ENCODE measurements at regions of chr10 and their contacts with region 1.

Region 1: DNA sequence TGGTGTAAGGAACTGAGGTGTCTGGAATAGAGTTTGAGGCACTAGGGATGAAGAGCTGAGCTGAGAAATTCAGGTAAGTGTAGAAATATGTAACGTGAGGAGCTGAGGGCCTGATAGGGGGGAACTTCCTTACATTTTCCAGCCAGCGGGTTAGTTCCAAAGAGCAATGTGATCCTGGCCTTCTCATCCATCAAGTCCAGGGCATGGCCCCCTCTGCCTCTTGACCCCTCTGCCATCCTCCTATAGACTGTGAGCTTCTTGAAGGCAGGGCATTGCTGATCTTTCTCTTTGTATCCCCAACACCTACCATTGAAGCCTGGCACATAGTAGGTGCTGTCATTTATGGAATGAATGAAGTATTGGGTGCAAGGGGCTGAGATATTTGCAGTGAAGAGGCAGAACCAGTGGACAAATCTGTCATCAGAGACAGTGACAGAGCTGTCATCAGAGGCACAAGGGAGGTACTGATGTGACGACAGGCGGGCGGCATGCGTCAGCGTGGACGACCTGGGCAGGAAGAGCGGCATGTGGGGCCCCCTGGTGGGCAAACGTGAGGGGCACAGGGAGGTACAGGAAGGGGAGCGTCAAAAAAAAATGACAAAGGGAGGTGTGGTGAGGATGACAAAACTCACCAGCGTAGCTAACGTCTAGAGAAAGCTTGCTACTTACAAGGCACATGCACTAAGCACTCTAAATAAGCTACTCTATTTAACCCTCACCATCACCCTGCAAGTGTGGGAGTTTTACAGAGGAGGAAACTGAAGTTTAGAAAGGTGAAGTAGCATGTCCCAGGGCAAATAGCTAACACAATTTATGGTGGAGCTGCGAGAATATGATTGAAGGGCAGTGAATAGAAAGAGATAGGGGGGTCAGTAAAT is 5.2 kb upstream of the CAMK2G start:
- DNase-seq: peak; percentile 98
- ATAC-seq: peak; percentile 86
- H3K4me3 Mint-ChIP-seq: no peak overlapping the region
- H3K27ac Mint-ChIP-seq: peak overlapping the region; percentile 71
- H3K4me1 Mint-ChIP-seq: peaks cover 45% of the 10 kb centered on the region
- H3K27me3 Mint-ChIP-seq: no peaks in the 10 kb centered on the region

Region 2: GRCh38 chr10:73252445-73253224 is 626.9 kb before region 1 on chr10 and contains the start of gene MRPS16:
- CTCF ChIA-PET with region 1: no interaction called
- POLR2A ChIA-PET with region 1: no interaction called
- intact Hi-C with region 1: loop called in 1 of 2 experiments (anchors 10 kb)
- DNase-seq: peak; percentile 95
- ATAC-seq: peak; percentile 84
- H3K4me3 Mint-ChIP-seq: peak within 1 kb of the TSS; percentile 94
- H3K27ac Mint-ChIP-seq: peak within 1 kb of the TSS; percentile 98
- H3K4me1 Mint-ChIP-seq: peaks cover 32% of the 10 kb centered on the region
- H3K27me3 Mint-ChIP-seq: no peaks in the 10 kb centered on the region
- total RNA-seq, gene MRPS16: 123 to 138 TPM

Region 3: DNA sequence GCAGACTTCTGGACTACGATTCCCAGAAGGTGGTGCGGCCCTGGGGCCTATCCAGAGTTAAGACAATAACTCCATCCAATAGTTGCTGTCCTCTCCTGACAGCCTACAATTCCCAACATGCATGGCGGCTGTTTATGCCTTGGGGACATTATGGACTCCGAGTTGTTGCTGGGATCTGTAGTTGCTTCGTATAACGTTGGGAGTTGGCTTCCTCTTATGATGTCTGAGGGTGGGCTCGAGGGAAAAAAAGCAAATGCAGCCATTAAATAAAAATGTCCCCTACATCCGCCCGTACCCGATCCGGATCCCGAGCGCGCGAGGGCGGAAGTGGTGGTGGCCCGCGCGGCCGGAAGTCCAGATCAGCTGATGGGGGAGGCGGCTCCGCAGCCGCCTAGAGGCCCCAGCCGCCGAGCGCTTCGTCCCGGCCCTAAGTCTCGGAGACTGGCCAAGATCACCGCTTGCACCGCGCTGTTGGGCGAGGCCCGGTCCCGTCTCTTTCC is 94.3 kb before region 1 on chr10 and contains the start of gene ZSWIM8:
- CTCF ChIA-PET with region 1: interaction called, 5 read pairs
- POLR2A ChIA-PET with region 1: no interaction called
- intact Hi-C with region 1: loop called in 1 of 2 experiments (anchors 1 kb)
- DNase-seq: peak; percentile 90
- ATAC-seq: peak; percentile 85
- H3K4me3 Mint-ChIP-seq: peak within 1 kb of the TSS; percentile 83
- H3K27ac Mint-ChIP-seq: peak within 1 kb of the TSS; percentile 98
- H3K4me1 Mint-ChIP-seq: peaks cover 46% of the 10 kb centered on the region
- H3K27me3 Mint-ChIP-seq: no peaks in the 10 kb centered on the region
- total RNA-seq, gene ZSWIM8: 40.1 to 67.3 TPM

Region 4: DNA sequence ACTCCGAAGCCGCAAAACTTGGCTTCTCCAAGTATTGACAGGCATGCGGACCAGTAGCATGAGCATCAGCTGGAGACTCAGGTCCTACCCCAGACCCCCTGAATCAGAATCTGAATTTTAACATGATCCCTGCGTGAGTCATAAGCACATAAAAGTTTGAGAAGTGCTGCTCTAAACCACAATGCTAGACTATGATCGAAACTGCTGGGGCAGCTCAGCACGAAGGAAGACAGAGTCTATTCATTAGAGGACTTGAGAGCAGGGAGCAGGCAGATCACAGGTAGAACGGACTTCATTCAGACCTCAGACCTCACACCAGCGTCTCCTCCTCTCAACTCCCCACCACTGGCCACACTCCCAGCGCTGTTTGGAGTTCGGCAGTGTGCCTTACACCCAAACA is 22.1 kb before region 1 on chr10:
- CTCF ChIA-PET with region 1: interaction called, 456 read pairs
- POLR2A ChIA-PET with region 1: interaction called, 6 read pairs
- intact Hi-C with region 1: loop called (anchors 1 kb)
- DNase-seq: peak; percentile 74
- ATAC-seq: peak; percentile 94
- H3K4me3 Mint-ChIP-seq: peak overlapping the region; percentile 37
- H3K27ac Mint-ChIP-seq: peak overlapping the region; percentile 78
- H3K4me1 Mint-ChIP-seq: peaks cover 60% of the 10 kb centered on the region
- H3K27me3 Mint-ChIP-seq: no peaks in the 10 kb centered on the region

Region 5: GRCh38 chr10:74081192-74081803 is 201.8 kb after region 1 on chr10:
- CTCF ChIA-PET with region 1: interaction called, 24 read pairs
- POLR2A ChIA-PET with region 1: no interaction called
- intact Hi-C with region 1: no loop called
- DNase-seq: peak; percentile 63
- ATAC-seq: peak; percentile 37
- H3K4me3 Mint-ChIP-seq: no peak overlapping the region
- H3K27ac Mint-ChIP-seq: no peak overlapping the region
- H3K4me1 Mint-ChIP-seq: peaks cover 41% of the 10 kb centered on the region
- H3K27me3 Mint-ChIP-seq: no peaks in the 10 kb centered on the region